Ascending aorta (tissue), 2 donors: ENCODE measurements at regions of chr9 and their contacts with region 1.

Region 1: GRCh38 chr9:94139672-94140417 is 55.6 kb downstream of the PTPDC1 start:
- DNase-seq: peak; percentile 65 to 95
- H3K4me3 ChIP-seq: peak overlapping the region; percentile 9 to 47
- H3K27ac ChIP-seq: peak overlapping the region; percentile 95
- H3K4me1 ChIP-seq: peaks cover 24 to 71% of the 10 kb centered on the region in 2 donors
- H3K27me3 ChIP-seq: no peaks in the 10 kb centered on the region
- CTCF ChIP-seq: no peak

Region 2: GRCh38 chr9:94065535-94065961 is 74.3 kb before region 1 on chr9:
- intact Hi-C with region 1: loop called (anchors 2 kb)
- DNase-seq: peak in 1 of 2 donors; percentile 88
- H3K4me3 ChIP-seq: no peak overlapping the region
- H3K27ac ChIP-seq: peak overlapping the region; percentile 31 to 53
- H3K4me1 ChIP-seq: peaks cover 2 to 3% of the 10 kb centered on the region in 2 donors
- H3K27me3 ChIP-seq: no peaks in the 10 kb centered on the region
- CTCF ChIP-seq: peak; percentile 74 to 88 (median 86)

Region 3: DNA sequence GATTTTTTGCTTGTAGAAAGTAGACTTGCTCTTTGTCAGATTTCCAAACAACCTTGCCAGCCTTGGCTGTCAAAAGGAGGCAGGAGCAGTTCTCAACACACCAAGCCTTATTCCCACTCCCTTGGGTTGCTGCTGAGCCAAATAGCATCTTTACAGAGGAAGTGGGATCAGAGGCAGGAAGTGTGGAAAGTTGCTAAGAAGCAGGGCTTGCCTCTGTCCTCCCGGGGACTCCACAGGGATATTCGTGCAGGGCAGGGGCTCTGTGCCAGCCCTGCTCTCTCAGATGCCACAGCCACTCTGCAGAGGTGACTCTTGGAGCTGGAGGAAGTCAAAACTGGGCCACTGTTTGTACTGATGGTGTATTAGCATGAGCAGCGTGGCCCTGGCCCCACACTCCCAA is 31.3 kb before region 1 on chr9:
- intact Hi-C with region 1: loop called (anchors 2 kb)
- DNase-seq: peak in 1 of 2 donors; percentile 77
- H3K4me3 ChIP-seq: no peak overlapping the region
- H3K27ac ChIP-seq: peak overlapping the region; percentile 51 to 68
- H3K4me1 ChIP-seq: peaks cover 0 to 18% of the 10 kb centered on the region in 2 donors
- H3K27me3 ChIP-seq: no peaks in the 10 kb centered on the region
- CTCF ChIP-seq: no peak

Region 4: DNA sequence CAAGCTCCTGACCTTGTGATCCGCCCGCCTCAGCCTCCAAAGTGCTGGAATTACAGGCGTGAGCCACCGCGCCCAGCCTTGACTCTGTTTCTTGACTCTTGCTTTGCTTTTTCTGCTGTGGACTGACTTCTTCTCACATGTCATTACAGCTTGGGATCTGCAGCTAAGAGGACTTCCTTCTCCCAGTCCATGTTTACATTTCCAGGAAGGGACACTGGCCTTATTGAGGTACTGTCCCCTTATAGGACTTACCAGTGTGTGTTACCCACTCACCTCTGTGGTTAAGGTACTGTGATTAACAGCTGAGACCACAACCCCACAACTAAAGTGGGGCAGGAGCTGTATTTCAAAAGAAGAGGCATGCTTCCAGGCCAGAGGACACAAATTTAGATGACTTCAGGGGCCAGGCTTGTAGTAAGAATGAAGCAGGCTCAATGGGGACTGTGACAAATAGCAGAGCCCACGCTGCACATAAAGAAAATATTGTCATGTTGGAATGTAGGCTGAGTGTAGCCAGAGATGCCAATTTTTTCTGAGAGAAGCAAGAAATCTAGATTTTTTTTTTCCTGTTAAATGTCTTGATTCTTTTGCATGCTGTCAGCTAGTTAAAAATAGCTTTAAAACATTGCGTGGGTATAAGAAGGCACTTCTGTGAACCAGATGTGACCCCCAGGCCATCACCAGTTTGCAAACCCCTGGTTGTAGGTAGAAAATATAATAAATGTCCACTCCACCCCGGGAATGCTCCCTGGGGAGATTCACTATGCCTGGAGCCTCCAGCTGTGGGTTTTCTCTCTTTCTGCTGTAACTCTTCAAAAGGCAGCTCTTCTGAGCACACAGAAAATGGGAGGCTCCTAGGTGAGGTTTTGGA is 19.5 kb after region 1 on chr9:
- intact Hi-C with region 1: loop called (anchors 1 kb)
- DNase-seq: peak in 1 of 2 donors; percentile 68
- H3K4me3 ChIP-seq: no peak overlapping the region
- H3K27ac ChIP-seq: peak overlapping the region; percentile 80 to 88
- H3K4me1 ChIP-seq: peaks cover 9 to 27% of the 10 kb centered on the region in 2 donors
- H3K27me3 ChIP-seq: no peaks in the 10 kb centered on the region
- CTCF ChIP-seq: no peak